Panc1 (cell line): ENCODE measurements at regions of chr5 and their contacts with region 1.

Region 1: GRCh38 chr5:98453296-98453695 is 320.2 kb upstream of the RGMB start:
- DNase-seq: no peak
- ATAC-seq: no peak
- H3K4me3 ChIP-seq: no peak overlapping the region
- H3K27ac ChIP-seq: no peak overlapping the region
- H3K4me1 ChIP-seq: no peaks in the 10 kb centered on the region
- H3K27me3 ChIP-seq: no peaks in the 10 kb centered on the region
- CTCF ChIP-seq: no peak

Region 2: GRCh38 chr5:98428806-98429205 is 24.5 kb before region 1 on chr5:
- CTCF ChIA-PET with region 1: no interaction called
- POLR2A ChIA-PET with region 1: no interaction called
- in situ Hi-C with region 1: no loop called
- intact Hi-C with region 1: loop called (anchors 2 kb)
- DNase-seq: no peak
- ATAC-seq: no peak
- H3K4me3 ChIP-seq: no peak overlapping the region
- H3K27ac ChIP-seq: no peak overlapping the region
- H3K4me1 ChIP-seq: no peaks in the 10 kb centered on the region
- H3K27me3 ChIP-seq: no peaks in the 10 kb centered on the region
- CTCF ChIP-seq: no peak